MCF 10A (cell line): ENCODE measurements at regions of chr5 and their contacts with region 1.

Region 1: DNA sequence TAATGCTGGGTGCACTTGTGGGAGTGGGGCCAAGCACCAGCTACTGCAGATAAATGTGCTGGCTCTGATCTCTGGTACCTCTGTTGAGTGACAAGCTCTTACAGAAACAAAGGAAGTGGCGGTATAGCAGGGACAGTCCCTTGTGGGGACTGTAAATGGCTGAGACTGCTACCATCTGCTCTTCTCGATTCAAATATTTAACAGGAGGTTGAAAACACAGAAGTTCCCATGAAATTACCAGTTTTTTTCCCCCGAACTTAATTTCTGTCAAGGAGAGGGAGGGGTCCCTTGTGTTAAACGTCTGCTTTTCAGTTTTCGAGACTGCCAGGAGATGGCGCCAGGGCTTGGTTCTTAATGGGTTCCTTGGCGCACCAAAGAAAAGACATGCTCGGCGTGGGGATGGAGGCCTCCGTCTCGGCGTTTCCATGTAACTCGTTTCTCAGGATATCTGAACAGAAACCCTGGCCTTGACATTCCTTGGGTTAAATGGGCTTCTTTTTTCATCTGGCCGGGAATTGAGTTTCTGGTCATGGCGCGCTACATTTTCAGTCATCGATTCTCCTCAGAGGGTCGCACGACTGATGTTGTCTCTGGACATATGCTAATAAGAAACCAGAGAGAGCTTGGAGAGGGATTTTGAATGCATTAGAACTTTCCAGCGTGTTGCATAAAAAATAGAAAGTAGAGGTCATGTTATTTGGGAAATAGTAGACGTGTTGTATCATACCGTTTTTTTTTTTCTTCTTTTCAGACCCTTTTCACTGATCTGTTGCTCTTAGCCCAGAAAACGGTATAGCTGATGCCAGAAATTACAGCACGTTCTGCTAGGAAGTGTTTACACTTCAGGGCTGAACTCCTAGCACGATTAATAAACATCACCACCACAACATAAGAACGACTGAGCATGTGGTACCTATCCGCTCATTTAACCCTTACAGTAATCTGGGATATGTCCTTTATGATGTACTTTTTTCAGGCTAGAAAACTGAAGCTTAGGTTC is 64.0 kb downstream of the CARTPT start:
- DNase-seq: peak; percentile 75
- H3K4me3 Mint-ChIP-seq: no peak overlapping the region
- H3K27ac Mint-ChIP-seq: no peak overlapping the region
- H3K4me1 Mint-ChIP-seq: peaks cover 13% of the 10 kb centered on the region
- H3K27me3 Mint-ChIP-seq: peaks cover 7% of the 10 kb centered on the region
- CTCF ChIP-seq: peak; percentile 66

Region 2: GRCh38 chr5:71569748-71570509 is 213.1 kb before region 1 on chr5:
- CTCF ChIA-PET with region 1: no interaction called
- POLR2A ChIA-PET with region 1: no interaction called
- intact Hi-C with region 1: no loop called
- DNase-seq: no peak
- H3K4me3 Mint-ChIP-seq: no peak overlapping the region
- H3K27ac Mint-ChIP-seq: no peak overlapping the region
- H3K4me1 Mint-ChIP-seq: no peaks in the 10 kb centered on the region
- H3K27me3 Mint-ChIP-seq: no peaks in the 10 kb centered on the region
- CTCF ChIP-seq: no peak

Region 3: DNA sequence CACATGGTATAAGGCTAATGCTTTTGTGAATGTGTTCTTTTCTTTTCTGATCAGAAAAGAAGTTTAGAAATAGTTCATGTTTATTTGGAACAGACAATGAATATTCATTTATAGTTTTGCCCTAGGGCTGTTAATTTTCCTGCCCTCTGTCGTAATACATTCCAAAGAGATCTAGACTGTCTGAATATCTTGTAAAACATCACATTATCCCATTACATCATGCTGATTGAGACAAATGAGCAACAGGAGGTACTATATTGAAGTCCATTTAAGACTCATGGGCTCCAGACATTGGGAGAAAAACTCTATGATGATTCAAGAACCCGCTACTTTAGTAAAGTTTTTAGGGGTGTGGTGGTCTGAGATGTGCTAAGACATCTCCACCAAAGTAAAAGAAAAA is 203.0 kb after region 1 on chr5:
- CTCF ChIA-PET with region 1: no interaction called
- POLR2A ChIA-PET with region 1: no interaction called
- intact Hi-C with region 1: no loop called
- DNase-seq: no peak
- H3K4me3 Mint-ChIP-seq: no peak overlapping the region
- H3K27ac Mint-ChIP-seq: no peak overlapping the region
- H3K4me1 Mint-ChIP-seq: no peaks in the 10 kb centered on the region
- H3K27me3 Mint-ChIP-seq: peaks cover 6% of the 10 kb centered on the region
- CTCF ChIP-seq: no peak

Region 4: GRCh38 chr5:72018146-72018803 is 235.2 kb after region 1 on chr5:
- CTCF ChIA-PET with region 1: interaction called, 26 read pairs
- POLR2A ChIA-PET with region 1: no interaction called
- intact Hi-C with region 1: loop called (anchors 1 kb)
- DNase-seq: peak; percentile 73
- H3K4me3 Mint-ChIP-seq: no peak overlapping the region
- H3K27ac Mint-ChIP-seq: no peak overlapping the region
- H3K4me1 Mint-ChIP-seq: peaks cover 8% of the 10 kb centered on the region
- H3K27me3 Mint-ChIP-seq: peaks cover 23% of the 10 kb centered on the region
- CTCF ChIP-seq: peak; percentile 91

Region 5: DNA sequence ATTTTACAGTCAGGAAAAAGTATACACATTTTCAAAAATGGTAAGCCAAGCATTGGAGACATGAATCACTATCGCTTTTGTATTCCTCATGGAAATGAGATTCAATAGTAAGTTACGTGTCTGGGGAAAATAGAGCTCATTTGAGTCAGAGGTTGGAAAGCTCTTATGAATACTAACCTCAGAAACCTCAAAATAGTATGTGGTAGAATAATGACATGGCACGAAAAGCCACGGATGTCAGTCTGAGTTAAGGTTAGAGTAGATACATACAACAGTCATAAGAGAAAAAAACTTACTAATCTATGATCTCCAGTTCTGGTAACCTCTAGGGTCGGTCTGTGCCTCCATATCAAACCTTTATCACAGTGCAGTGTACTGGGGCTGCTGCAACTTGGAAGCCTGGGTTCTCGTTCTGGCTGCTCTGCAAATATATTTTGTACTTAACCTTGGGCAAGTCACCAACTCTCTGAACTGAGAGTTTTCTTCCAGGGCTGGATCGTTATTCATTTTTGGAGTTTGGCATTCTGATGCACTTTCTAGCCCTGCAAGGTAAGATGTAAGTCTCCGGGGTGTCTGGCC is 356.0 kb after region 1 on chr5:
- CTCF ChIA-PET with region 1: interaction called, 3 read pairs
- POLR2A ChIA-PET with region 1: no interaction called
- intact Hi-C with region 1: loop called (anchors 5 kb)
- DNase-seq: peak; percentile 51
- H3K4me3 Mint-ChIP-seq: no peak overlapping the region
- H3K27ac Mint-ChIP-seq: no peak overlapping the region
- H3K4me1 Mint-ChIP-seq: peaks cover 33% of the 10 kb centered on the region
- H3K27me3 Mint-ChIP-seq: no peaks in the 10 kb centered on the region
- CTCF ChIP-seq: no peak

Region 6: DNA sequence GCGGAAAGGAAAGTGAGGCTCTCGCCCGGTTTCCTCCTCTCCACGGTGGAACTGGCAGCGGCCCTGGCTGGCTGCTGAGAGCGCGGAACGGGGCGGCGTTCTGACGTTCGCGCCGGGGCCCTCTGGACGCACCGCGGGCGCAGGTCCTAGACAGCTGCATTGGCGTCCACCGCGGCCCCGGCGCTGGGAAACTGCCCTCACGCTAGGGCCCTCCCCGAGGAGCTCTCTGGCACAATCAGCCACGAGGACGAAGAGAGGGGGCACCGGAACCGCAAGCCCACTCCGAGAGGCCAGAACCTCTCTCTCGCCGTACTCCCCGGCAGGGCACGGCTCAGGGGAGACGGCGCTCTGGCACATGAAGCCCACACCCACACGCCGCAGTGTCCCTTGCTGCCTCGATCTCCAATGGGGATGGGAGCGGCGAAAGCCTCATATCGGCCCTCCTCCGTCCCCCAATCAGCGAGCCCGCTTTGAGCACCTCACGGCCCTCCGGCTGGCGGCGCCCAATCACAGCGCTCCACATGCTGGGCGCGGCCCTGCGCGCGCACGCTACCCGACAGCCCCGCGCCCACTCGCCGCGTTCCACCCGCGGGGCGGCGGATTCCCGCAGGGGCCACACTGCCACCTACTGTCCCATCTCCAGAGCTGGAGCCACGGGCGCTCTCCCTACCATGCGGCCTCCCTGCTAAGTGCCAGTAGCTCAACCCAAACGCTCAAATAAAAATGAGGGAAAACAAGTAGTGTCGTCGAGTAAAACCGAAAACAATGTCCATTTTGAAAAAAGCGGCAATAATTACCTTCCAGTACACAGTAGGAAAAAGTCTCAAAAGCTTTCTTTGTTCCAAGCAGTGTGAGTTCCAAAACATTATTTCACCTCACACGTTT is 525.1 kb after region 1 on chr5:
- CTCF ChIA-PET with region 1: interaction called, 8 read pairs
- POLR2A ChIA-PET with region 1: interaction called, 4 read pairs
- intact Hi-C with region 1: loop called (anchors 1 kb)
- DNase-seq: peak; percentile 98
- H3K4me3 Mint-ChIP-seq: peak overlapping the region; percentile 87
- H3K27ac Mint-ChIP-seq: peak overlapping the region; percentile 95
- H3K4me1 Mint-ChIP-seq: peaks cover 9% of the 10 kb centered on the region
- H3K27me3 Mint-ChIP-seq: no peaks in the 10 kb centered on the region
- CTCF ChIP-seq: peak; percentile 79